ENCODE measurements at regions of chr15 and their contacts with region 1.

Region 1: DNA sequence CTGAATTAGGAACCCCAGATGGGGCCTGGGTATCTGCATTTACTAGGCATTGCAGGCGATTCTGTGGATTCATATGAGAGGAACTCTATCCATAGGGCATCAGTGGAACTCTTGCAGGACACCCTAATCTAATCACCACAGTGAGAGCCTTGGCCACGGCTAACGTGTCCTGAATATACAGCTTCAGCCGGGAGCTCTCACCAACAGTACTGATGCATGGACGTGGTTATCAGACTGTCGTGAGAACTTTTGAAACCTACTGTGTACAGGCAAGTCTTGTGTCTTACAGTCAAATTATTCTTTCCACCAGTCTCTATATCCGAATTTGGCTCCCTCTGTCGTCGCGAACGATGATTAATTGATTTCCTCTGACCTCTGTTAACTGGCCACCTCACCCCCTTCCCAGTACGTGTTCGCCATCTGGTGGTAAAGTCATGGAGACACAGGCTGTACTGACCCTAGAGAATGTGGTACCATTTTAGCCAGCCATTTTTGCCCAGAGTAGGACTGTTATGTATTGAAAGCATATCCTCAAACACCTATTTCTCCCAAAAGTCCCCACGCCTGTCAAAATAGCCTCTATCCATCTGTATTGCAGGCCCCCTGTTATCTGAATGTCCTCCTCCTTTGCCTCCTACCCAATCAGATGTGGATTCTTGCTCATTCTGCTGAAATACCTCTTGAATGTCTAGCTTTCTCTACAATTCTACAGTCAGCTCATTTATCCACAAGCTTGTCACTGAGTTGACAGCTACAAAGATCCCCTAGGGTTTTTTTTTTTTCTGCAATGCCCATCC is 39.7 kb downstream of the GLDN start:
- DNase-seq: peak; percentile 39
- ATAC-seq: peak; percentile 96

Region 2: GRCh38 chr15:51185213-51186159 is 195.7 kb before region 1 on chr15:
- intact Hi-C with region 1: no loop called
- DNase-seq: no peak
- ATAC-seq: no peak

Region 3: GRCh38 chr15:51283665-51284064 is 97.5 kb before region 1 on chr15:
- intact Hi-C with region 1: loop called (anchors 2 kb)
- DNase-seq: no peak
- ATAC-seq: no peak

Region 4: GRCh38 chr15:51443282-51443914 is 62.2 kb after region 1 on chr15:
- intact Hi-C with region 1: no loop called
- DNase-seq: peak; percentile 23
- ATAC-seq: no peak